ENCODE measurements at regions of chr6 and their contacts with region 1.

Region 1: GRCh38 chr6:44338228-44339122 is 4.0 kb upstream of the SPATS1 start:
- DNase-seq: peak; percentile 48
- H3K4me3 ChIP-seq: no peak overlapping the region
- H3K27ac ChIP-seq: no peak overlapping the region
- H3K4me1 ChIP-seq: peaks cover 18% of the 10 kb centered on the region
- H3K27me3 ChIP-seq: peaks cover 2% of the 10 kb centered on the region
- CTCF ChIP-seq: peak; percentile 62 to 82

Region 2: GRCh38 chr6:44096612-44097011 is 241.9 kb before region 1 on chr6:
- CTCF ChIA-PET with region 1: no interaction called
- dilution Hi-C with region 1: no loop called
- in situ Hi-C with region 1: no loop called
- intact Hi-C with region 1: loop called (anchors 1 kb)
- DNase-seq: peak; percentile 61
- H3K4me3 ChIP-seq: no peak overlapping the region
- H3K27ac ChIP-seq: no peak overlapping the region
- H3K4me1 ChIP-seq: no peaks in the 10 kb centered on the region
- H3K27me3 ChIP-seq: no peaks in the 10 kb centered on the region
- CTCF ChIP-seq: peak; percentile 85 to 87

Region 3: DNA sequence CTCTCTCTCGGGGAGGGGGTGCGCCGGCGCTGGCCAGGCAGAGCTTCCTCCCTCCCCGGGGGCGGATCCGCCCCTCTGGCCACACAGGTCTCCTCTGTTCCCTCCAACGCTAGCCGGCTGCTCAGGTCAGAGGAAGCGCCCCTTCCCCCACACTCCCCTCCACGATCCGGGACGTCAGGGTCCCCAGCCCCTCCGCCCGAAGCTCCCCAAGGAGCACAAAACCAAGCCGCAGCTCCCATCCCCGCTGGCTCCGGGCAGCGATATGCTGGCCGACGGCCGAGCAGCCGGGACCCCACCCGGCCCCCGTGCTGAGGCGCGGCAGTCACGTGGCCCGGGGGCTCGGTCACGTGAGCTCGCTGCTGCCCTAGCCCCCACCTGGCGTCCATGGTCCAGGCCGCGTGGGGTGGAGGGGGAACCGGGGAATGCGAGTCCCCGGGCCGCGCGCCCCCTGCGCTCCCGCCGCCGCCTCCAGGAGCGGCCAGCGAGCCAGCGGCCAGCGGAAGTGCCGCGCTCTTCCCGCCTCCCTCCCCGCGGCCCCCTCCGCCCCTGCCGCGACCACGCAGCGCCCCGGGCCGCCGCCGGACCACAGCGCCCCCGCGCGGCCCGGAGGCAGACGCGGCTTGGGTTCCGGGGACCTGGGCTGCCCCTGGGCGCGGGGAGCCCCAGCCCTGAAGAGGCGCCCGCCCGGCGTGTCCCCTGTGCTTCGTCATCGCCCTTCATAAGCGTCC is 81.3 kb before region 1 on chr6 and contains the start of gene SLC35B2:
- CTCF ChIA-PET with region 1: no interaction called
- dilution Hi-C with region 1: loop called (anchors 5 kb)
- in situ Hi-C with region 1: no loop called
- intact Hi-C with region 1: no loop called
- DNase-seq: peak; percentile 65
- H3K4me3 ChIP-seq: peak within 1 kb of the TSS; percentile 85 to 90 (median 87)
- H3K27ac ChIP-seq: peak within 1 kb of the TSS; percentile 69
- H3K4me1 ChIP-seq: peaks cover 8% of the 10 kb centered on the region
- H3K27me3 ChIP-seq: no peaks in the 10 kb centered on the region
- CTCF ChIP-seq: peak; percentile 36 to 53
- total RNA-seq, gene SLC35B2: 72.6 to 76.3 TPM

Region 4: GRCh38 chr6:44297063-44298038 is 41.1 kb before region 1 on chr6:
- CTCF ChIA-PET with region 1: no interaction called
- dilution Hi-C with region 1: loop called (anchors 5 kb)
- in situ Hi-C with region 1: no loop called
- intact Hi-C with region 1: no loop called
- DNase-seq: peak; percentile 21
- H3K4me3 ChIP-seq: peak overlapping the region in 2 of 3 experiments; percentile 24 to 44
- H3K27ac ChIP-seq: no peak overlapping the region
- H3K4me1 ChIP-seq: peaks cover 9% of the 10 kb centered on the region
- H3K27me3 ChIP-seq: peaks cover 13% of the 10 kb centered on the region
- CTCF ChIP-seq: no peak

Region 5: DNA sequence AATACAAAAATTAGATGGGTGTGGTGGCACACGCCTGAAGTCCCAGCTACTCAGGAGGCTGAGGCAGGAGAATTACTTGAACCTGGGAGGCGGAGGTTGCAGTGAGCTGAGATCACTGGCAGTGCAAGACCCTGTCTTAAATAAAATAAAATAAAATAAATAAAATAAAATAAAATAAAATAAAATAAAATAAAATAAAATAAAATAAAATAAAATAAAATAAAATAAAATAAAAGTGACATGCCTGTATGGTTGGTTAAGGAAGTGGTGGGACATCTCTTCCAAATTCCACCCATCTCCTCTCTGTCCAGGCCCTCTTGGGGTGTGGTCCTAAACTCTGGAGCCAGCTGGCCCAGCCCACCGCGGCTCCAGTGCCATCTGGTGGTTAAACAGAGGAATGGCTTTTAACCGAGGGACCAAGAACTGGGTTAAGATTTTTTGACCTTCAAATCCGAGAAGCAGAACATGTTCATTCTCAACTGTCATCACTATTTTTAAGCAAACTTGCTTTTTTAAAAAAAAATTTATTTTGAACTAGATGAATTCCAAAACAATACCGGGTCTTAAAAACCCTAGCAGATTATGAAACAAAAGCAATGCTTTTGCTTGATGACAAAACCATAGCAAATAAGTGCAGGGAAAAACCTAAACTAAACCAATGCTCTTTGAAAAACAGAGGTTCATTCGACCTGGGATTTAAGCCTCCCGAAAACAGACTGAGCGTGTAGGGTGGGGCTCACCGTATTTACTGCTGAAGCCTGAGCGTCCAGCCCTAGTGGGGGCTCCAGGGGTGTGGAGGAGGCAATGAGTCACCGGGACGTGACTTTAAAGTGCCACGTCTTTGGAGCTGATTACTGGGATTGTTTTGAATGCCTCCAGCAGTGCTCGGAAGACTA is 117.8 kb after region 1 on chr6:
- CTCF ChIA-PET with region 1: no interaction called
- dilution Hi-C with region 1: no loop called
- in situ Hi-C with region 1: no loop called
- intact Hi-C with region 1: loop called (anchors 1 kb)
- DNase-seq: peak; percentile 41
- H3K4me3 ChIP-seq: no peak overlapping the region
- H3K27ac ChIP-seq: no peak overlapping the region
- H3K4me1 ChIP-seq: peaks cover 27% of the 10 kb centered on the region
- H3K27me3 ChIP-seq: no peaks in the 10 kb centered on the region
- CTCF ChIP-seq: peak; percentile 77 to 91

Measured in mammary epithelial cell (primary cell).